Mammary epithelial cell (primary cell): ENCODE measurements at regions of chr5 and their contacts with region 1.

Region 1: GRCh38 chr5:112823623-112824596 is 37.2 kb upstream of the SRP19 start:
- DNase-seq: no peak
- H3K4me3 ChIP-seq: no peak overlapping the region
- H3K27ac ChIP-seq: no peak overlapping the region
- H3K4me1 ChIP-seq: no peaks in the 10 kb centered on the region
- H3K27me3 ChIP-seq: no peaks in the 10 kb centered on the region
- CTCF ChIP-seq: no peak

Region 2: GRCh38 chr5:112533362-112533761 is 290.5 kb before region 1 on chr5:
- CTCF ChIA-PET with region 1: no interaction called
- dilution Hi-C with region 1: no loop called
- in situ Hi-C with region 1: no loop called
- intact Hi-C with region 1: no loop called
- DNase-seq: peak; percentile 32
- H3K4me3 ChIP-seq: no peak overlapping the region
- H3K27ac ChIP-seq: no peak overlapping the region
- H3K4me1 ChIP-seq: no peaks in the 10 kb centered on the region
- H3K27me3 ChIP-seq: peaks cover 2% of the 10 kb centered on the region
- CTCF ChIP-seq: no peak

Region 3: DNA sequence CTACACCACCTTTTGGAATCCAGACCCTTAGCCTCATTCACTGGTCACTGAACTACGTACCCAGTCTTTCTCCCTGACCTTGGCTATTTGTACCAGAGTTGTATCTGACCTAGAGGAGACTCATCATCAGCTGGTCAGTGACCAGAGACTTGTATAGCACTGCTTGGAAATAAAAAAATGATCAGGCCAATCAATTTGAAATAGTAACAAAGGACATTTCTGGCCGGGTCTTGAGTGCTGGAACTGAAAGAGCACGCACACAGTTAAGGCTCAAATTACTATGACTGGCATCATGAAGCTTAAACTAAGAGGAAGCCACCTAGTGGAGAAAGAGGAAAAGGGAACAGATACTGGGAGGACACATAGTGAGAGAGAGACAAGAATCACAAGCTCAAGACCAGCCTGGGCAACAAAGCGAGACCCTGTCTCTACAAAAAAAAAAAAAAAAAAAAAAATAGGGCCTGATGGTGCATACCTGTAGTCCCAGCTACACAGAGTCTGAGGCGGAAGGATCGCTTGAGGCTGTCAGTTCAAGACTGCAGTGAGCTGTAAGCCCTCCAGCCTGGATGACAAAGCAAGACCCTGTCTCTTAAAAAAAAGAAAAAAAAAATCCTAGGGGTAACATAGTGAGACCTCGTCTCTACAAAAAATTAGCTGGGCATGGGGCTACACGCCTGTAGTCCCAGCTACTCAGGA is 24.4 kb after region 1 on chr5:
- CTCF ChIA-PET with region 1: interaction called, 40 read pairs
- dilution Hi-C with region 1: no loop called
- in situ Hi-C with region 1: no loop called
- intact Hi-C with region 1: no loop called
- DNase-seq: peak; percentile 57
- H3K4me3 ChIP-seq: no peak overlapping the region
- H3K27ac ChIP-seq: no peak overlapping the region
- H3K4me1 ChIP-seq: no peaks in the 10 kb centered on the region
- H3K27me3 ChIP-seq: no peaks in the 10 kb centered on the region
- CTCF ChIP-seq: peak; percentile 73 to 76